AG04449 (cell line): ENCODE measurements at regions of chr7 and their contacts with region 1.

Region 1: GRCh38 chr7:27662490-27663205 is at the start of gene HIBADH:
- DNase-seq: peak; percentile 97
- H3K4me3 ChIP-seq: peak within 1 kb of the TSS; percentile 77
- CTCF ChIP-seq: peak; percentile 37

Region 2: GRCh38 chr7:27677912-27678612 is 15.4 kb after region 1 on chr7:
- CTCF ChIA-PET with region 1: no interaction called
- POLR2A ChIA-PET with region 1: interaction called, 12 read pairs
- DNase-seq: peak; percentile 85
- H3K4me3 ChIP-seq: no peak overlapping the region
- CTCF ChIP-seq: no peak